ENCODE measurements at regions of chr4 and their contacts with region 1.

Region 1: GRCh38 chr4:16199093-16199492 is 27.2 kb downstream of the TAPT1 start:
- DNase-seq: no peak
- ATAC-seq: no peak
- H3K4me3 ChIP-seq: no peak overlapping the region
- H3K27ac ChIP-seq: no peak overlapping the region
- H3K4me1 ChIP-seq: no peaks in the 10 kb centered on the region
- H3K27me3 ChIP-seq: no peaks in the 10 kb centered on the region
- CTCF ChIP-seq: peak; percentile 30; the same call in 1 of the 2 replicates

Region 2: DNA sequence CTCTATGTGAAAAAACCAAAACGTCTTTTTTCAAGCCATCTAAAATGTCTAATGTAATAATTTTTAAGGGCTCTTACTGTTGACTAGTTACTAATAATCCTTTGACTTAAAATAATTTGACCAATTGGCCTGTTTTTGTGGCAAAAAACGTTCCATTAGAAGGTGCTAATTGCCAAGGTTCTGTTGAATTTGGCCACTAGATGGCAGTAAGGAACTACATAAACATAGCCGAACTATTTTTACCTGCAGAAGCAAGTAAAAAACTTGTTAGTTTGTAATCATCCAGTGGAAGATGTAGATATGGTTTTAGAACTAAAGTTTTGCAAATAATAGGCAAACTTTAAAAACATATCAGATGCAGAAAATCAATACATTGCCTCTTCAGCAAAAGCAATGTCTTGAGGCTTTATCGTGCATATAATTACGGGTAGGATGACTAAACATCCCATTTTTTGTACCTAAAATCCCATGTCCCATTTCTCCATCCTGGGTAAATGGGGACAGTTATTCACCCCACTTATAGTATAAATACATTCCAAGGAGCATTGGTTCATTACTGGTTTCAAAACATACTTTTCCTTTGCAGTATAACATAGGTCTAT is 172.8 kb before region 1 on chr4:
- CTCF ChIA-PET with region 1: no interaction called
- POLR2A ChIA-PET with region 1: no interaction called
- in situ Hi-C with region 1: no loop called
- intact Hi-C with region 1: loop called (anchors 1 kb)
- DNase-seq: peak; percentile 27
- ATAC-seq: no peak
- H3K4me3 ChIP-seq: no peak overlapping the region
- H3K27ac ChIP-seq: no peak overlapping the region
- H3K4me1 ChIP-seq: no peaks in the 10 kb centered on the region
- H3K27me3 ChIP-seq: peaks cover 2% of the 10 kb centered on the region; the same call in 1 of the 2 replicates
- CTCF ChIP-seq: peak; percentile 59; the same call in 1 of the 2 replicates

Region 3: GRCh38 chr4:16231570-16232232 is 32.6 kb after region 1 on chr4:
- CTCF ChIA-PET with region 1: interaction called, 12 read pairs
- POLR2A ChIA-PET with region 1: no interaction called
- in situ Hi-C with region 1: no loop called
- intact Hi-C with region 1: no loop called
- DNase-seq: no peak
- ATAC-seq: no peak
- H3K4me3 ChIP-seq: no peak overlapping the region
- H3K27ac ChIP-seq: no peak overlapping the region
- H3K4me1 ChIP-seq: no peaks in the 10 kb centered on the region
- H3K27me3 ChIP-seq: no peaks in the 10 kb centered on the region
- CTCF ChIP-seq: no peak

Measured in Panc1 (cell line).